ENCODE measurements at regions of chr2 and their contacts with region 1.

Region 1: GRCh38 chr2:48328159-48328809 is 201.7 kb upstream of the STON1 start:
- DNase-seq: no peak
- ATAC-seq: no peak
- H3K4me3 ChIP-seq: no peak overlapping the region
- H3K27ac ChIP-seq: no peak overlapping the region
- H3K4me1 ChIP-seq: peaks cover 2% of the 10 kb centered on the region; the same call in 1 of the 2 replicates
- H3K27me3 ChIP-seq: no peaks in the 10 kb centered on the region
- CTCF ChIP-seq: no peak
- POLR2A ChIP-seq: no peak
- RAD21 ChIP-seq: no peak

Region 2: GRCh38 chr2:47897883-47898731 is 430.2 kb before region 1 on chr2:
- CTCF ChIA-PET with region 1: no interaction called
- POLR2A ChIA-PET with region 1: no interaction called
- dilution Hi-C with region 1: no loop called
- in situ Hi-C with region 1: loop called (anchors 10 kb)
- intact Hi-C with region 1: no loop called
- DNase-seq: no peak
- ATAC-seq: no peak
- H3K4me3 ChIP-seq: no peak overlapping the region
- H3K27ac ChIP-seq: no peak overlapping the region
- H3K4me1 ChIP-seq: no peaks in the 10 kb centered on the region; the same call in none of the 2 replicates
- H3K27me3 ChIP-seq: no peaks in the 10 kb centered on the region
- CTCF ChIP-seq: no peak
- POLR2A ChIP-seq: no peak
- RAD21 ChIP-seq: no peak

Region 3: DNA sequence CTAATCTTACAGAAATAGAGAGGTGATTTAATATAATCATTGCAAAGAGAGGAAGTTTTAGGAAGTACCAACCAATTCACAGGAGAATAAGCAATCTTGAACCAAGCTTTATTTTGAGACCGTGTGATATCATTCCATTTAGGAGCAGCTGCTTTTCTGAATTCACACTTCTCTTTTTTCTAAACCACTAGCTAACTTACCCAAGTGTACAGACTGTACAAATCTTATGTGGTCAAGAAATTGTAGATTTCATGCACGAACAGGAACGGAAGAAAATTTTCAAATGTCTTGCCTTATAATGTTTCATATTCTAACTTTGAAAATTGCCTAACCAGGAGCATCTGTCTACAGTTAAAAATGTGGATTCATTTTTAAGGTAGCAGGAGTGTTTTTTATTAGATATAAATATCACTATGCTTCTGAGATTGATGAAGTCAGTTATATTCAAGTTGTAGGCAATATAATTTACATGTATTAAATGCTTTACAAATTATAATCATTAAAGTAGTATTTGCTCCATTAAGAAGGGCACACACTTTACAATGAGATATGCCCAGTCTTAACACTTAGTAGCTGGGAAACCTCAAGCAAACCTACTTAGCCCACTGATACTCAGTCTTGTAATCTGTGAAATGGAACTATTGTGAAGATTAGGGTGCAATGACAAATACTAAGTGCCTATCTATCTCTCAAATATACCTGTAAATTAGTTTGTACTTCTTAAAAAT is 100.5 kb before region 1 on chr2:
- CTCF ChIA-PET with region 1: no interaction called
- POLR2A ChIA-PET with region 1: no interaction called
- dilution Hi-C with region 1: no loop called
- in situ Hi-C with region 1: no loop called
- intact Hi-C with region 1: no loop called
- DNase-seq: no peak
- ATAC-seq: no peak
- H3K4me3 ChIP-seq: no peak overlapping the region
- H3K27ac ChIP-seq: no peak overlapping the region
- H3K4me1 ChIP-seq: no peaks in the 10 kb centered on the region
- H3K27me3 ChIP-seq: no peaks in the 10 kb centered on the region; the same call in 1 of the 2 replicates
- CTCF ChIP-seq: no peak
- POLR2A ChIP-seq: no peak
- RAD21 ChIP-seq: no peak

Region 4: DNA sequence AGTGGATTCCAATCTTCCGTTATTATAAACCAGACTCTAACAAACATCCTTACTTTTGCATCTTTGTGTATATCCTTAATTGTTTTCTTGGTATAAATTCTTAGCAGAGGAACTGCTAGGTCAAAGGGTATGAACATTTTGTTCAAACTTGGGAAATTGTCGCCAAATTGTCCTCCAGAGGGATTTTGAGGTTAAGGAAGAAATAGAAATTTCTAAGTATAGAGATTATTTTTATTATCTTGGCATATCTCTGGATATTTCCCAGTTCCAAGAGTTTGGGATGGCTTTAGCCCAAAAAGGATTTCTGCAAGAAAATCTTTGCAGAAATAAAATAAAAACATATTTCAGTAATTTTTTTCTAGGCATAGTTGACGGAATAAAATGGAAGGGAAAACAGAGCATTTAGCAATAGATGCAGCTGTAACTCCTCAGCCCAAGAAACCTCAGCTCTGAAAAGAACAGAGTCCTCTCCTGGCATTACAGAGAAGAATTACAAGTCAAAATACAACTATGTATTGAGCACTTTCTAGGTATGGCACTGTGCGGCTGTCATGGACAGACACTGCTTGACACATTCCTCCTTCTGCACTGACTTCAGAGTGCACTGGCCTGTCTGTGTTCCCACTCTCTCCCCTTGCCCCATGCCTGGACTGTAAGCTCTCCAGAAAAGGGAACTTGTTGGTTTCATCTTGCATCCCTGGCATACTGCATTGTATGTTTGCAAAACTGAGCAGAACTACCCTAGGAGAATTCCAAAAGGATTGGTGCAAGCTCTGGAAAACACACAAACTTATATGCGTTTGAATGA is 84.4 kb after region 1 on chr2:
- CTCF ChIA-PET with region 1: no interaction called
- POLR2A ChIA-PET with region 1: no interaction called
- dilution Hi-C with region 1: no loop called
- in situ Hi-C with region 1: no loop called
- intact Hi-C with region 1: no loop called
- DNase-seq: no peak
- ATAC-seq: no peak
- H3K4me3 ChIP-seq: no peak overlapping the region
- H3K27ac ChIP-seq: no peak overlapping the region
- H3K4me1 ChIP-seq: peaks cover 2% of the 10 kb centered on the region; the same call in 1 of the 2 replicates
- H3K27me3 ChIP-seq: no peaks in the 10 kb centered on the region
- CTCF ChIP-seq: no peak
- POLR2A ChIP-seq: no peak
- RAD21 ChIP-seq: no peak

Region 5: DNA sequence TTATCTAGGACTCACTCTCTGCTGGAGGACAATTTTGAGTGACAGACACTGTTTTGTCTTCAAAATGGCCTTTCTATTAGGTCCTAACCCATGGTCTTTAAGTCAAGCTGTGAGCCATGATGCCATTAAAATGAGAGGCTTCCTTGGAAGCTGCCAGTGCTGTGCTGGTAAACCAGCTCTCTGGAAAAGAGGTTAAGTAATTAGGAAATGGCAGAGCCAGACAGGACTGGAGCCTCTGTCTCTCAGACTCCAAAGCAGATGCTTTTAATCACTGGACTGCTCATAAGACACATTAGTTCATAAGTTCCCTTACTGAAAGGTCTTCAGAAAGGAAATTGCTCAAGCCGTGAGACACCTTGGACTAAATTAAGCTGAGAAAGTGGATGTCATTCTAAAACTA is 453.1 kb after region 1 on chr2:
- CTCF ChIA-PET with region 1: no interaction called
- POLR2A ChIA-PET with region 1: no interaction called
- dilution Hi-C with region 1: no loop called
- in situ Hi-C with region 1: no loop called
- intact Hi-C with region 1: no loop called
- DNase-seq: no peak
- ATAC-seq: peak; percentile 17; the same call in 1 of the 2 replicates
- H3K4me3 ChIP-seq: no peak overlapping the region
- H3K27ac ChIP-seq: no peak overlapping the region
- H3K4me1 ChIP-seq: no peaks in the 10 kb centered on the region; the same call in 1 of the 2 replicates
- H3K27me3 ChIP-seq: no peaks in the 10 kb centered on the region; the same call in 1 of the 2 replicates
- CTCF ChIP-seq: no peak
- POLR2A ChIP-seq: no peak
- RAD21 ChIP-seq: no peak

Measured in IMR-90 (cell line).